HCT116 (cell line): ENCODE measurements at regions of chr2 and their contacts with region 1.

Region 1: GRCh38 chr2:111883661-111884591 is at the start of gene ANAPC1:
- DNase-seq: peak; percentile 61
- ATAC-seq: peak; percentile 92
- H3K4me3 ChIP-seq: peak within 1 kb of the TSS; percentile 96 to 99
- H3K27ac ChIP-seq: peak within 1 kb of the TSS; percentile 97
- H3K4me1 ChIP-seq: peaks cover 0 to 5% of the 10 kb centered on the region in 2 experiments; a peak in 1 of 4 replicates
- H3K27me3 ChIP-seq: no peaks in the 10 kb centered on the region
- CTCF ChIP-seq: no peak
- POLR2A ChIP-seq: peak; percentile 94
- RAD21 ChIP-seq: no peak
- total RNA-seq, gene ANAPC1: 76.5 TPM

Region 2: GRCh38 chr2:111219285-111219684 is 664.6 kb before region 1 on chr2:
- CTCF ChIA-PET with region 1: no interaction called
- POLR2A ChIA-PET with region 1: no interaction called
- RAD21 ChIA-PET with region 1: no interaction called
- intact Hi-C with region 1: no loop called
- DNase-seq: no peak
- ATAC-seq: no peak
- H3K4me3 ChIP-seq: no peak overlapping the region
- H3K27ac ChIP-seq: no peak overlapping the region
- H3K4me1 ChIP-seq: no peaks in the 10 kb centered on the region
- H3K27me3 ChIP-seq: no peaks in the 10 kb centered on the region
- CTCF ChIP-seq: no peak
- POLR2A ChIP-seq: no peak
- RAD21 ChIP-seq: no peak

Region 3: DNA sequence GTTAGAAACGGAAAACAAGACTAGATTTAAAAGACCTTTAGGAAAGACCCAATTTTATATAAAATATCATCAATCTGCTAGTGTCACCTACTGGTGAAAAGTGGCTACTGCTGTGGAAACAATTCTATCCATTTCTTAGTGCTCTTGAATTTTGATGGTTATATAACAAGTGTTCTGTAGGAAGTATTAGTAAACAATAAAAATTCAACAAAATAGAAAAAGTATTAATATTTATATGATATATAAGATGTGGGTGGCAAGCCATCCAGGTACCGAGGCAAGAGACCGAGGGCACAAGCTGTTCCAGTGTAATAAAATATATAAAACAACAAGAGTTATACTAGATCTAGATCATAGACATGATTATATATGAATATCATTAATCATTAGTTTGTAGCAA is 165.0 kb after region 1 on chr2:
- CTCF ChIA-PET with region 1: interaction called, 7 read pairs
- POLR2A ChIA-PET with region 1: interaction called, 3 read pairs
- RAD21 ChIA-PET with region 1: no interaction called
- intact Hi-C with region 1: loop called (anchors 1 kb)
- DNase-seq: peak; percentile 59
- ATAC-seq: peak; percentile 80
- H3K4me3 ChIP-seq: no peak overlapping the region
- H3K27ac ChIP-seq: no peak overlapping the region
- H3K4me1 ChIP-seq: peaks cover 4 to 6% of the 10 kb centered on the region in 2 experiments; a peak in 3 of 4 replicates
- H3K27me3 ChIP-seq: no peaks in the 10 kb centered on the region
- CTCF ChIP-seq: peak; percentile 69 to 96 (median 71)
- POLR2A ChIP-seq: no peak
- RAD21 ChIP-seq: peak; percentile 92

Region 4: GRCh38 chr2:112121682-112122254 is 237.8 kb after region 1 on chr2:
- CTCF ChIA-PET with region 1: no interaction called
- POLR2A ChIA-PET with region 1: no interaction called
- RAD21 ChIA-PET with region 1: no interaction called
- intact Hi-C with region 1: loop called (anchors 5 kb)
- DNase-seq: peak; percentile 26
- ATAC-seq: no peak
- H3K4me3 ChIP-seq: no peak overlapping the region
- H3K27ac ChIP-seq: no peak overlapping the region
- H3K4me1 ChIP-seq: no peaks in the 10 kb centered on the region
- H3K27me3 ChIP-seq: no peaks in the 10 kb centered on the region
- CTCF ChIP-seq: peak; percentile 58 to 78 (median 71); a peak in 5 of 6 replicates
- POLR2A ChIP-seq: no peak
- RAD21 ChIP-seq: peak; percentile 83

Region 5: GRCh38 chr2:112275306-112275886 is 391.5 kb after region 1 on chr2 and contains the start of gene ZC3H6:
- CTCF ChIA-PET with region 1: no interaction called
- POLR2A ChIA-PET with region 1: no interaction called
- RAD21 ChIA-PET with region 1: no interaction called
- intact Hi-C with region 1: loop called (anchors 10 kb)
- DNase-seq: peak; percentile 95
- ATAC-seq: peak; percentile 93
- H3K4me3 ChIP-seq: peak within 1 kb of the TSS; percentile 76 to 86
- H3K27ac ChIP-seq: peak within 1 kb of the TSS; percentile 99
- H3K4me1 ChIP-seq: peaks cover 5 to 12% of the 10 kb centered on the region in 2 experiments; a peak in 3 of 4 replicates
- H3K27me3 ChIP-seq: no peaks in the 10 kb centered on the region
- CTCF ChIP-seq: no peak; a peak in 1 of 6 replicates
- POLR2A ChIP-seq: peak; percentile 76
- RAD21 ChIP-seq: no peak
- total RNA-seq, gene ZC3H6: 7.0 TPM